Tibial artery (tissue), 4 donors: ENCODE measurements at regions of chr5 and their contacts with region 1.

Region 1: GRCh38 chr5:179345433-179346321 is at the start of gene ADAMTS2:
- DNase-seq: peak; percentile 61 to 89
- H3K4me3 ChIP-seq: peak within 1 kb of the TSS; percentile 71 to 75
- H3K27ac ChIP-seq: peak within 1 kb of the TSS; percentile 59 to 72
- H3K4me1 ChIP-seq: peaks cover 0 to 38% (median 24%) of the 10 kb centered on the region in 4 donors
- H3K27me3 ChIP-seq: no peaks in the 10 kb centered on the region
- CTCF ChIP-seq: no peak

Region 2: DNA sequence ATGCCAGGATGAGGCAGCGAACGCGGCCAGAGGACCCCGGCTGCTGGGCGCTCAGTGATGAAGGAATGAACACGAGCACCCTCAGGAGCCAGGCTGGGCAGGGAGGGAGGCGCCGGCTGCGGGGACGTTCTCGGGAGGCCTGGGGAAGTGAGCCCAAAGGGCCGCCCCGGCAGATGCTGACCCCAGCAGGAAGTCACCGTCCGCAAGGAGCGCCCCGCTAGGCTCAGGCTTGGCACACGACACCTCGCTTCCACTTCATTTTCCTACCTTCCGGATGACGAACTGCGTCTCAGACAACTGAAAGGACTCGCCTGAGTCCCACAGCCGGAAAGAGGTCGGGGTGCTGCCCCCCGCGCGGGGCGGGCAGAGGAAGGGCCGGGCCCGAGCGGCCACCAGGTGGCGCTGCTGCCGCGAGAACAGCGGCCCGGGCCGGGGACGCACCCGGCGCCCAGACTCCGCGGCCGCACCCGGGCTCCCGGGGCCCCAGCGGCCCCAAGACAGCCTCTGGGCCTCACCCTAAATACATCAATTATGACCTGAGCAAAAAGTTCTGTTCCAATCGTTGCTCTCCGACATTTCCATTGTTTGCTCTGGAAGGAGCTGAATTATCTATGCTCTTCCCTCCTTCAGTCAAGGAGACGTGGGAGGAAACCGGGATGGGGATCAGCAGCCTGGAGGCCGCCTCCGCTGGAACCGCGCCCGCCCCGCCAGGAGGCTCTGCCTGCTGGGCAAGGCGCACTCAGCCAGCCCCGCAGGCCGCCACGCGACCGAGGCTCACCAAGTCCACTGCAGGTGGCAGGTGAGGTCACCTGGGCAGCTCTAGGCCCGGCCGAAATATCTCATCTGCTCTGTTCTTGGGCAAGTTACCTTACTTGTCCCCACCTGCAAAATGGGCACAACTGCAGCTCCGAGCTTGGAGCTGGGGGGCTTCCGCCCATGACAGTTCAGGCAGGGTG is 178.5 kb before region 1 on chr5:
- intact Hi-C with region 1: loop called (anchors 1 kb)
- DNase-seq: peak in 1 of 2 donors; percentile 68
- H3K4me3 ChIP-seq: peak overlapping the region in 1 of 2 donors; percentile 35
- H3K27ac ChIP-seq: no peak overlapping the region
- H3K4me1 ChIP-seq: peaks cover 0 to 15% (median 7%) of the 10 kb centered on the region in 4 donors
- H3K27me3 ChIP-seq: no peaks in the 10 kb centered on the region
- CTCF ChIP-seq: peak; percentile 83 to 96

Region 3: DNA sequence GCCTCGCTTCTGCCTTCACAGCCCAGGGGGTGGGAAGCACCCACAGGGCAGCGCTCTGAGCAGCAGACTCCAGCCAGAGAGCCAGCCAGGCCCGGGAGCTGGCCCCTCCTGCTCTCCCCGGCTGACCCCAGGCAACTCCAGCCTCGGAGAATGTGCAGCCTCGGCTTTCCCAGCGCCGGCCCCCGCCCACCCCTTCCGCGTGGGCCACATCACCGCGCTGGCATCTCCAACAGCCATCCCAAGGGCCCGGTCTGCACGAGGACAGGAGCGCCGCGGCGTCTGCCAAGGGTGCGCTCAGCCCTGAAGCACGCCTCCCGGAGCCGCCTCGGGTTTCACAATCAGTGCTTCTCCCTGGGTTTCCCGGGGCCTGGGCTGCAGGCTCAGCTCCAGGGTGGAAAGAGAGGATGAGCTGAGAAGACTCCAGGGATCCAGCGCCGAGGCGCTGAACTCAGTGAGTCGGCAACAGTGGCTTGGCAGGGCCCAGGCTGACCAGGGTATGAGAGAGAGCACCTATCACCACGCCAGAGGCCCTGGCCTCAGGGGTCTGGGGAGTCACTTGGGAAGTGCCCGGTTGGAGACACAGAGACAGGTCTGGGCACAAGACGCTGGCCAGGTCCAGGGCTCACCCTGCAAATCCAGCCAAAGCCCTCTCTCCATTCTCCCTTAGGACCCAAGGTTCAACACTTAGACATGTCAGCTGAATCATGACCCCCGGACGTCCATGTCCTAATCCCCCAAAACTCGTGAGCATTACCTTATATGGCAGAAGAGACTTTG is 80.0 kb before region 1 on chr5:
- intact Hi-C with region 1: loop called (anchors 2 kb)
- DNase-seq: peak; percentile 97 to 99
- H3K4me3 ChIP-seq: peak overlapping the region in 1 of 2 donors; percentile 23
- H3K27ac ChIP-seq: peak overlapping the region; percentile 68 to 75
- H3K4me1 ChIP-seq: peaks cover 0 to 62% (median 43%) of the 10 kb centered on the region in 4 donors
- H3K27me3 ChIP-seq: no peaks in the 10 kb centered on the region
- CTCF ChIP-seq: no peak

Region 4: GRCh38 chr5:179294891-179295772 is 50.5 kb before region 1 on chr5:
- intact Hi-C with region 1: no loop called
- DNase-seq: peak; percentile 58 to 83
- H3K4me3 ChIP-seq: no peak overlapping the region
- H3K27ac ChIP-seq: peak overlapping the region; percentile 53 to 60
- H3K4me1 ChIP-seq: peaks cover 0 to 55% (median 38%) of the 10 kb centered on the region in 4 donors
- H3K27me3 ChIP-seq: no peaks in the 10 kb centered on the region
- CTCF ChIP-seq: peak; percentile 21 to 24

Region 5: GRCh38 chr5:179484761-179485160 is 139.1 kb after region 1 on chr5:
- intact Hi-C with region 1: no loop called
- DNase-seq: no peak
- H3K4me3 ChIP-seq: no peak overlapping the region
- H3K27ac ChIP-seq: no peak overlapping the region
- H3K4me1 ChIP-seq: no peaks in the 10 kb centered on the region
- H3K27me3 ChIP-seq: peaks cover 0 to 16% of the 10 kb centered on the region in 2 donors
- CTCF ChIP-seq: no peak

Region 6: GRCh38 chr5:179495906-179496455 is 150.3 kb after region 1 on chr5:
- intact Hi-C with region 1: loop called (anchors 10 kb)
- DNase-seq: no peak
- H3K4me3 ChIP-seq: no peak overlapping the region
- H3K27ac ChIP-seq: no peak overlapping the region
- H3K4me1 ChIP-seq: no peaks in the 10 kb centered on the region
- H3K27me3 ChIP-seq: peaks cover 0 to 26% of the 10 kb centered on the region in 2 donors
- CTCF ChIP-seq: no peak